ENCODE measurements at regions of chrX and their contacts with region 1.

Region 1: GRCh38 chrX:8971116-8971515 is 62.8 kb downstream of the FAM9B start:
- DNase-seq: peak in 2 of 4 experiments; percentile 6 to 30
- ATAC-seq: peak; percentile 77
- H3K4me3 ChIP-seq: no peak overlapping the region
- H3K27ac ChIP-seq: no peak overlapping the region
- H3K4me1 ChIP-seq: no peaks in the 10 kb centered on the region
- H3K27me3 ChIP-seq: no peaks in the 10 kb centered on the region
- CTCF ChIP-seq: peak; percentile 7 to 35 (median 10); a peak in 2 of 6 replicates
- EP300 ChIP-seq: no peak
- POLR2A ChIP-seq: no peak
- RAD21 ChIP-seq: peak in 1 of 2 experiments; percentile 54; a peak in 3 of 4 replicates

Region 2: GRCh38 chrX:9019151-9019550 is 48.0 kb after region 1 on chrX:
- CTCF ChIA-PET with region 1: no interaction called
- POLR2A ChIA-PET with region 1: no interaction called
- in situ Hi-C with region 1: no loop called
- intact Hi-C with region 1: no loop called
- DNase-seq: no peak
- ATAC-seq: no peak
- H3K4me3 ChIP-seq: no peak overlapping the region
- H3K27ac ChIP-seq: no peak overlapping the region
- H3K4me1 ChIP-seq: no peaks in the 10 kb centered on the region
- H3K27me3 ChIP-seq: no peaks in the 10 kb centered on the region
- CTCF ChIP-seq: no peak
- EP300 ChIP-seq: no peak
- POLR2A ChIP-seq: no peak
- RAD21 ChIP-seq: no peak

Region 3: GRCh38 chrX:9708904-9709553 is 737.9 kb after region 1 on chrX:
- CTCF ChIA-PET with region 1: interaction called, 4 read pairs
- POLR2A ChIA-PET with region 1: no interaction called
- in situ Hi-C with region 1: no loop called
- intact Hi-C with region 1: loop called (anchors 5 kb)
- DNase-seq: peak; percentile 63 to 80 (median 66)
- ATAC-seq: peak; percentile 97
- H3K4me3 ChIP-seq: no peak overlapping the region
- H3K27ac ChIP-seq: no peak overlapping the region
- H3K4me1 ChIP-seq: no peaks in the 10 kb centered on the region
- H3K27me3 ChIP-seq: no peaks in the 10 kb centered on the region
- CTCF ChIP-seq: peak; percentile 68 to 79 (median 73)
- EP300 ChIP-seq: no peak
- POLR2A ChIP-seq: no peak
- RAD21 ChIP-seq: peak; percentile 70 to 76